ENCODE measurements at regions of chr15 and their contacts with region 1.

Region 1: GRCh38 chr15:89485855-89486361 is 10.5 kb downstream of the RHCG start:
- DNase-seq: no peak
- ATAC-seq: no peak
- H3K4me3 ChIP-seq: no peak overlapping the region
- H3K27ac ChIP-seq: no peak overlapping the region
- H3K4me1 ChIP-seq: peaks cover 7% of the 10 kb centered on the region; the same call in 1 of the 3 replicates
- CTCF ChIP-seq: no peak
- EP300 ChIP-seq: no peak
- POLR2A ChIP-seq: no peak
- RAD21 ChIP-seq: no peak

Region 2: GRCh38 chr15:89531796-89532537 is 46.1 kb after region 1 on chr15:
- CTCF ChIA-PET with region 1: no interaction called
- POLR2A ChIA-PET with region 1: no interaction called
- DNase-seq: no peak
- ATAC-seq: peak; percentile 36 to 51; a peak in 3 of 6 replicates
- H3K4me3 ChIP-seq: no peak overlapping the region
- H3K27ac ChIP-seq: no peak overlapping the region
- H3K4me1 ChIP-seq: no peaks in the 10 kb centered on the region
- CTCF ChIP-seq: no peak
- EP300 ChIP-seq: no peak
- POLR2A ChIP-seq: no peak
- RAD21 ChIP-seq: no peak

Region 3: DNA sequence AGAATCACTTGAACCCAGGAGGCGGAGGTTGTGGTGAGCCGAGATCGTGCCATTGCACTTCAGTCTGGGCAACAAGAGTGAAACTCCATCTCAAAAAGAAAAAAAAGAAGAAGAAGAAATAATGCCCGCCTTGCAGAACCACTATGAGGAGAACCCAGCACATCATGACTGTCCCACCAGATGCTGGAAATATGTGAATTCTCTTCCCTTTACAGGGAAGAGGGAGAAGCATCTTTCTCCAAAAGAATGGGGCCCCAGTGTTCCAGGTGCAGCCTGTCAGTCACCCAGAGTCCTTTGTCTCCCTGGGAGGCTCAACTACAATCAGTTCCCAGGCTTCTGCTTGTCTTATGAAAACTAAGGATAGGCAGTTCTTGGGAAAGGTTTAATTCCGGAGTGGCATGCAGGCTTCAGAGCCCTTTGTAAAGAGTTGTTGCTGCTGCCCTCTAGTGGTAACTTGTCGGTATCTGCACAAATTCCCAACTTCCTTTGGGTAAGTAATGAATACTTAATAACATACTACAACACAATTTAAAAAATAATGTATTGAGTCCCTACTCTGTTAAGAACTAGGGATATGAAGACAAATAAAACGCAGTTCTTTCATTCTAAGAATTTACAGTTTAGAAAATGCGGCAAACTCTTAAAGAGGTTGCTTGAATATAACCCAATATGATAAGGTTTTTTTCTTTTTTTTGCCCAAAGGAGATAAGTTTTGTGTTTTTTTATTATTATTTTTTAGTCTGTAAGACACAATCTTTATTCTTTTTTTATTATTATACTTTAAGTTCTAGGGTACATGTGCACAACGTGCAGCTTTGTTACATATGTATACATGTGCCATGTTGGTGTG is 70.7 kb after region 1 on chr15:
- CTCF ChIA-PET with region 1: interaction called, 98 read pairs
- POLR2A ChIA-PET with region 1: no interaction called
- DNase-seq: peak; percentile 72 to 89
- ATAC-seq: peak; percentile 79 to 93
- H3K4me3 ChIP-seq: no peak overlapping the region
- H3K27ac ChIP-seq: peak overlapping the region in 1 of 2 experiments; percentile 48; a peak in 1 of 6 replicates
- H3K4me1 ChIP-seq: peaks cover 3% of the 10 kb centered on the region; the same call in 2 of the 3 replicates
- CTCF ChIP-seq: peak; percentile 89
- EP300 ChIP-seq: no peak
- POLR2A ChIP-seq: no peak
- RAD21 ChIP-seq: peak; percentile 86 to 87